CD8-positive, alpha-beta memory T cell (primary cell): ENCODE measurements at regions of chr4 and their contacts with region 1.

Region 1: GRCh38 chr4:26279446-26279845 is 41.4 kb upstream of the RBPJ start:
- DNase-seq: no peak
- H3K4me3 ChIP-seq: no peak overlapping the region
- H3K4me3 Mint-ChIP-seq: no peak overlapping the region
- H3K27ac ChIP-seq: no peak overlapping the region
- H3K27ac Mint-ChIP-seq: no peak overlapping the region
- H3K4me1 ChIP-seq: no peaks in the 10 kb centered on the region
- H3K4me1 Mint-ChIP-seq: no peaks in the 10 kb centered on the region
- H3K27me3 ChIP-seq: no peaks in the 10 kb centered on the region
- H3K27me3 Mint-ChIP-seq: no peaks in the 10 kb centered on the region

Region 2: DNA sequence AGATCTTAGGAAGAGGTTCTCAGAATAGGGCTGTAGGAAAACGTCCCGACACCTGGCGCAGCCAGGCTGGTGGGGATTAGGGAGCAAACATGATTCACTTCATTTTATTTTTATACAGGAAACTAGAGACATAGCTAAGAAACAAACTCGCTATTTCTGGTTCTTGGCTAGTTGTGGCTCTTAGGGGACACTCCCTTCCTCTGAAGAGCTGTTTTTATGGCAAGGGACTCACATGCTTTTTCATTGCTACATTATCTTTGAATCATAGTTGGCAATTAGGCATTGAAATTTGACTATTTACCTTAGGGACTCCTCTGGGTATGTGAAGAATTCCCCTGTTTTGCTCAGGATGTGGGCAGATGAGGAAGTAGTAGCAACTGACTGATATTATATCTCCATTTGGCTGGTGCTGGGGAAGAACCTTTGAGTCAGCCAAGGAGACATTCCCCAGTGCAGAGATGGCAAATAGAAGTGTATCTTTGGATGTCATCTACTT is 191.0 kb before region 1 on chr4:
- CTCF ChIA-PET with region 1: no interaction called
- POLR2A ChIA-PET with region 1: interaction called, 10 read pairs
- DNase-seq: no peak
- H3K4me3 ChIP-seq: no peak overlapping the region
- H3K4me3 Mint-ChIP-seq: peak overlapping the region in 1 of 7 donors; percentile 16
- H3K27ac ChIP-seq: no peak overlapping the region
- H3K27ac Mint-ChIP-seq: peak overlapping the region in 4 of 8 donors; percentile 28 to 56 (median 41)
- H3K4me1 ChIP-seq: peaks cover 4% of the 10 kb centered on the region
- H3K4me1 Mint-ChIP-seq: peaks cover 17 to 21% (median 21%) of the 10 kb centered on the region in 3 donors
- H3K27me3 ChIP-seq: no peaks in the 10 kb centered on the region
- H3K27me3 Mint-ChIP-seq: peaks cover 1 to 6% of the 10 kb centered on the region in 2 donors